Activated CD4-positive, alpha-beta memory T cell treated with anti-CD3 and anti-CD28 coated beads for 36 hours (primary cell): ENCODE measurements at regions of chr1 and their contacts with region 1.

Region 1: DNA sequence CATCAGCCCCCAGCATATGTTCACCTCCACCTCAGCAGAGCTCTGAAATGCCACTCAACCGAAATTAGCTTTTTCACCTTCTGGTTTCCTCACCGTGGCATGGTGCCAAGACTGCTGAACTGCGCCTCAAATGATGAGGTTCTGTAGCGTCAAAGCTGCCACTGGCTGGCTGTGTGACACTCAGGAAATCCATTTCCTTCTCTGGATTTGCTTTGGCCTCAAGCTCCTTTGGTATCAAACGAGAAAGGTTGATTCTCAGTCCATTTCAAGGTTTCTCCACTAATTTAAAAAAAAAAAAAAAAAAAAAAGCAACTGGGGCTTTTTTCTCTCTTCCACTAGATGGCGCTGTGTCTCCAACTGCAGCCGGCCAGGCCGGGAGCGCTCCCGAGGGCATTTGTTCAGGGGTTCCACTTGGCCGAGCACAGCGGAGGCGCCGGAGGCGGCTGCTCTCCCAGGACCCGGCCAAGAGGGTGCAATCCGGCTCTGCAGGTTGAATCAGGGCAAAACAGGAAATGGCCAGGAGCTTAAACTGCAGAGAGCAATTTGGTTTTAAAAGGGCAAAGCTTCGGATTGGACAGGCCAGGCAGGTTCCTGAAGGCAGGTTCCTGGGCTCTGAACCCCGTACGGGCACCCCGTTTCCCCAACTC is 26.5 kb upstream of the PLA2G2C start:
- DNase-seq: peak; percentile 66
- H3K4me3 Mint-ChIP-seq: no peak overlapping the region
- H3K27ac Mint-ChIP-seq: no peak overlapping the region
- H3K4me1 Mint-ChIP-seq: peaks cover 6% of the 10 kb centered on the region
- H3K27me3 Mint-ChIP-seq: peaks cover 39% of the 10 kb centered on the region

Region 2: GRCh38 chr1:20202171-20202570 is 10.6 kb before region 1 on chr1:
- CTCF ChIA-PET with region 1: interaction called, 10 read pairs
- POLR2A ChIA-PET with region 1: no interaction called
- intact Hi-C with region 1: no loop called
- DNase-seq: no peak
- H3K4me3 Mint-ChIP-seq: no peak overlapping the region
- H3K27ac Mint-ChIP-seq: no peak overlapping the region
- H3K4me1 Mint-ChIP-seq: no peaks in the 10 kb centered on the region
- H3K27me3 Mint-ChIP-seq: peaks cover 15% of the 10 kb centered on the region

Region 3: DNA sequence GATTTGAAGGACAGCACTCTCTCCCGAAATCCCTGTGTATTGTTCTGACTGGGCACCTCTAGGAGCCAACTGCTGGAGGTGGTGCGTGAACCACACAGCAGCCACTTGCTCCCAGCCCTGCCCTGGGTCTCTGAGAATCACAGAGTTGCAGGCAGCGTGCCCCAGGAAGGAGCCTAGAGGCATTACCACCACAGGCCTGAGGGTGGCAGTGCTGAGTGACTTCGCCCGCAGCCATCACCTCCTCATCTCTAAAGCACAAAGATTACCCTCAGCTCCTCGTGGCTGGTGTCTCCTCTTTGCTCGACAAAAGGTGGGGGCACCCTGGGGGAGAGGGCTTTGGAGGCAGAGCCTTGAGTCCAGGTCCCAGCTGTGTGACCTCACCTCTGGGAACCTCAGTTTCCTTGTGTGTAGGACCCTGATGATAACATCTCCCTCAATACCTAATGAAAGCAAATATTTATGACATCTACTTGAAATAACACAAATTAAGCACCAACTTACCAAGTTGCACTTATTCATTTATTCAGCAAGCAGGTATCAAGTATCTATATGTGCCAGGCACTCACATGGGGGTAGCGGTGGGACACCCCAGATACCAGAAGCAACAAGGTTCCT is 164.2 kb after region 1 on chr1:
- CTCF ChIA-PET with region 1: interaction called, 9 read pairs
- POLR2A ChIA-PET with region 1: no interaction called
- intact Hi-C with region 1: loop called (anchors 10 kb)
- DNase-seq: peak; percentile 77
- H3K4me3 Mint-ChIP-seq: no peak overlapping the region
- H3K27ac Mint-ChIP-seq: no peak overlapping the region
- H3K4me1 Mint-ChIP-seq: peaks cover 3% of the 10 kb centered on the region
- H3K27me3 Mint-ChIP-seq: peaks cover 17% of the 10 kb centered on the region

Region 4: GRCh38 chr1:20430355-20431175 is 217.8 kb after region 1 on chr1:
- CTCF ChIA-PET with region 1: interaction called, 16 read pairs
- POLR2A ChIA-PET with region 1: no interaction called
- intact Hi-C with region 1: loop called (anchors 5 kb)
- DNase-seq: peak; percentile 60
- H3K4me3 Mint-ChIP-seq: no peak overlapping the region
- H3K27ac Mint-ChIP-seq: no peak overlapping the region
- H3K4me1 Mint-ChIP-seq: peaks cover 8% of the 10 kb centered on the region
- H3K27me3 Mint-ChIP-seq: peaks cover 25% of the 10 kb centered on the region